ENCODE measurements at regions of chr4 and their contacts with region 1.

Region 1: DNA sequence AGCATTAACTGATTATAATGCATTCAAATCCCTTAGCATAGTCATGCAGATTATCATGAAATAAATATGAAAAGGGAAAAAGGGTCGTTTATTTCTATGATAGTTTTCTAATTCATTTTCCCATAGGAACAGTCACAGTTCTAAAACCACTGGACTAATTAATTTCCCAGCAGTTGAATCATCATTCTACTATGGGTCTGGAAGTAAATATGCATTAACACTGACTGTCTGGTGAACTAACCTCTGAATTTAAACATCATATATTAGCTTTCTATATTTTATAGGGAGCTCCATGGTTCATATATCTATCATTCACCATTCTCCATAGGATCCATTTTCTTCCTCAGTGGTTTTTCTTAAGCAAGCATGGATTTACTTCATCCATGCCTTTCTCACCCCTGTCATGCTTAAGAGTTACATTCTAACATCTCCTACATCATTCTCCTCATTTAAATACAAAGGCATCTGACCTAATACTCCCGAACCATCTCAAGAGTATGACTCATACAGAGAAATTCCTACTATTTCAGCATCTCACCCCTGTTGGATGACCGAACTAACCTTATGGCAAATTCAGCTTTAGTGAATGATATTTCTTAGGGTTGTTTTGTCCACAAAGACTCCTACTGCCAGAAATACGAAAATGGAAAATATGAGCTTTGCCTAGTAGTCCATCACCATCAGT is 198.7 kb upstream of the ADAMTS3 start:
- DNase-seq: no peak
- ATAC-seq: no peak
- H3K4me3 ChIP-seq: no peak overlapping the region
- H3K27ac ChIP-seq: no peak overlapping the region
- H3K4me1 ChIP-seq: peaks cover 0 to 6% of the 10 kb centered on the region in 2 experiments; a peak in 1 of 5 replicates
- H3K27me3 ChIP-seq: no peaks in the 10 kb centered on the region
- CTCF ChIP-seq: no peak
- EP300 ChIP-seq: no peak
- POLR2A ChIP-seq: no peak
- RAD21 ChIP-seq: no peak

Region 2: GRCh38 chr4:72326692-72327632 is 440.8 kb before region 1 on chr4:
- CTCF ChIA-PET with region 1: no interaction called
- POLR2A ChIA-PET with region 1: no interaction called
- in situ Hi-C with region 1: no loop called
- intact Hi-C with region 1: loop called (anchors 10 kb)
- DNase-seq: peak in 2 of 4 experiments; percentile 29 to 43
- ATAC-seq: peak; percentile 57; the same call in 2 of the 3 replicates
- H3K4me3 ChIP-seq: no peak overlapping the region
- H3K27ac ChIP-seq: no peak overlapping the region
- H3K4me1 ChIP-seq: no peaks in the 10 kb centered on the region
- H3K27me3 ChIP-seq: no peaks in the 10 kb centered on the region
- CTCF ChIP-seq: peak; percentile 50 to 70 (median 53); a peak in 4 of 6 replicates
- EP300 ChIP-seq: no peak
- POLR2A ChIP-seq: no peak
- RAD21 ChIP-seq: peak; percentile 69 to 73

Region 3: DNA sequence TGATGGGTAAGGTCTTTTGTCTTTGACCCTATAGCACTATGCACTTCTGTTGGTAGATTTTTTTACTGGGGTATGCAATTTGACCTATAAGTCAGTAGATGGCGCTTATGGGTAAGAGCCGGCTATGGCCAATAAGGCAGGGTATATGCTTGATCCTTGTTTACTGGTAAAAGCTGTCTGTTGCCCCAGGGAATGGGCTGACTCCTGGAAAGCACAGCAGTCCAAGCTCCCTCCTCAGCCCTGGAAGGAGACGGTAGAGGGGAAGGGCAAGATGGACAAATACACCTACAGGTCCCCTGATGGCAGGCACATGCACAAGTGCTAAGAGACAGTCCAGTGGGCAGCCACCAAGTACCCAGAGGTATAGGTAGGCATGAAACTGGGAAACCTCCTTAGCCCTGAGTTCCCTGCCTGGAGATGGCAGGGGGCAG is 262.4 kb before region 1 on chr4:
- CTCF ChIA-PET with region 1: no interaction called
- POLR2A ChIA-PET with region 1: no interaction called
- in situ Hi-C with region 1: no loop called
- intact Hi-C with region 1: loop called (anchors 10 kb)
- DNase-seq: peak; percentile 22 to 57 (median 38)
- ATAC-seq: peak; percentile 96
- H3K4me3 ChIP-seq: no peak overlapping the region
- H3K27ac ChIP-seq: no peak overlapping the region
- H3K4me1 ChIP-seq: no peaks in the 10 kb centered on the region
- H3K27me3 ChIP-seq: no peaks in the 10 kb centered on the region
- CTCF ChIP-seq: peak; percentile 63 to 75 (median 68)
- EP300 ChIP-seq: no peak
- POLR2A ChIP-seq: no peak
- RAD21 ChIP-seq: peak; percentile 66 to 86

Region 4: GRCh38 chr4:72666910-72667309 is 100.8 kb before region 1 on chr4:
- CTCF ChIA-PET with region 1: no interaction called
- POLR2A ChIA-PET with region 1: no interaction called
- in situ Hi-C with region 1: no loop called
- intact Hi-C with region 1: no loop called
- DNase-seq: peak in 2 of 4 experiments; percentile 7 to 48
- ATAC-seq: peak; percentile 91
- H3K4me3 ChIP-seq: no peak overlapping the region
- H3K27ac ChIP-seq: no peak overlapping the region
- H3K4me1 ChIP-seq: no peaks in the 10 kb centered on the region
- H3K27me3 ChIP-seq: no peaks in the 10 kb centered on the region
- CTCF ChIP-seq: no peak
- EP300 ChIP-seq: no peak
- POLR2A ChIP-seq: no peak
- RAD21 ChIP-seq: no peak